Sigmoid colon (tissue), 7 donors: ENCODE measurements at regions of chr2 and their contacts with region 1.

Region 1: DNA sequence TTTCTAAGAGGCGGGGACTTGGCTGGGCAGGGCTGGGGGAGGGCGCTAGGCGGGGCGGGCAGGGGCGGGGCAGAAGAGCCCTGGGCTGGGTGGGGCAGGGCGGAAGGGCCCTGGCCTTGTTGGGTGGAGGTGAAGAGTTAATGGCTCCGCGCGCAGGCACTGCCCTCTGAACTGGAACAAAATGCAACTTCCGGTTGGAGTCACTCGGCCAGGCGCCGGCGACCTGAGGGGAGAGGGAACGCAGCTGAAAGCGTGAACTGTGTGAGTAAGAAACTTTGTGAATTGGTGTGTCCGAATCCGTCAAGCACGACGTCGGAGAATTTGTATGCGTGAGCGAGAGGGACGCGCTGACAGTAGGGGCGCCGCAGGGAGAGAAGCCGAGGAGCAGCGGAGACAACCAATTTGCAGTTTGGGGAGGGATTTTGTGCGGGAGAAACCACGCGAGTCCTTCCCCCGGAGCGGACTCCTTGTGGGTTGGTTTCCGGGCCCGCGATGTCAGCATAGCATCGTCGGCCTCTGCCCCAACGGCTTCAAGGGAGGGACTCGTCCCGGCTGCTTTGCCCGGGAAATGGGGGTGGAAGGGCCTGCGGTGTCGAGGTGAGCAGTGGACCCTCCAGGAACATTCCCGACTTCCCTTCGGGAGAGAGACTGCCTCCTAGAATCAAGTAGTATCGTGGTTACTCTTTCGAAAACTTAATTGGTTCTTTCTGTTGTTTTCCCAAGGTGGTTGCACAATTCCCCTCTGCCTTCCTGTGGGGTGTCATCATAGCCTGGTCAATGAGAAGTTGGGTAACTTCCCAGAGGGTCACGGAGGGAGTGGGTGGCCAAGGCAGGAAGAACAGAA is at the start of gene TANK:
- DNase-seq: peak; percentile 96
- H3K4me3 ChIP-seq: peak within 1 kb of the TSS; percentile 76 to 92 (median 83)
- H3K27ac ChIP-seq: peak within 1 kb of the TSS; percentile 93 to 96 (median 96)
- H3K4me1 ChIP-seq: peaks cover 0 to 54% (median 27%) of the 10 kb centered on the region in 4 donors
- H3K27me3 ChIP-seq: no peaks in the 10 kb centered on the region
- CTCF ChIP-seq: no peak
- EP300 ChIP-seq: peak in 1 of 4 donors; percentile 6
- POLR2A ChIP-seq: peak; percentile 97 to 98
- total RNA-seq, gene TANK: 45.7 to 82.8 (median 71.0) TPM

Region 2: GRCh38 chr2:161122772-161123530 is 37.5 kb before region 1 on chr2:
- intact Hi-C with region 1: loop called (anchors 5 kb)
- DNase-seq: peak; percentile 75
- H3K4me3 ChIP-seq: no peak overlapping the region
- H3K27ac ChIP-seq: peak overlapping the region; percentile 69 to 78 (median 73)
- H3K4me1 ChIP-seq: peaks cover 0 to 30% (median 17%) of the 10 kb centered on the region in 4 donors
- H3K27me3 ChIP-seq: no peaks in the 10 kb centered on the region
- CTCF ChIP-seq: no peak
- EP300 ChIP-seq: peak in 1 of 4 donors; percentile 20
- POLR2A ChIP-seq: no peak

Region 3: DNA sequence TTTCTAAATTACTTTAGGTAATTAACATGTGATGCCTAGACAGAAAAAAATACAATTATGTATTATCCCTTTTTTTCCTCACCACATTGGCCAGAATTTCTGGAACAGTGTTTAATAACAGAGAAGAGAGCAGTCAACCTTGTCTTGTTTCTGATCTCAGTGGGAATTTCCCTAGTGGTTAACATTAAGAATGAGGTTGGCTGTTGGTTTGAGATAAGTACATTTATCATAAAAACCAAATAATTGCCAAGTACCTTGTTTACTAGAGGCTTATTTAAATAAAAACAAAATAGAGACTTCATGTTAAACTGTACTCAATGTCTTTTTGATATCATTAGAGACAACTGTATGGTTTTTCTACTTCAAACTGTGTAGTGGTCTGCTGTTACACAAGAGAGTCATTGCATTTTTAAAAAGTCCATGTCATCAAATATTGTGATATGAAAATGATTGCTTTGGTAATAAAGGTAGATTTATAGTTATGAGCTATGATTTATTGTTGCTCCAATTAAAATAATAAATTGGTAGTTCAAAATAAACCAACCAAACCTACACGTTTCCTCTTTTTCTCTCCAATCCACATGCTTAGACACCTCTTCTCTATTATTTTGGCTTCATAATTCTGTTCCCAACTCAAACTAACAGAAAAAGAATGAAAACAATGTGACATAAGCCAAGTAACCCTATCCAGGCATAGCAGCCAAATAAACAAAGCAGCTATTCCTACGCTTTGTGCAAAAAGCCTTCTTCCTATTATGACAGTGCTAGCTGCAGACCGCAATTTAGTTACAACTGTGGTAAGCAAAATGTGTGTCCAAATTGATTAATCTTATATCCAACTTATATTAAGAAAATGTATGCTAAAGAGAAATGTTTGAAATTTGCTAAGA is 21.1 kb before region 1 on chr2:
- intact Hi-C with region 1: loop called (anchors 2 kb)
- DNase-seq: no peak
- H3K4me3 ChIP-seq: peak overlapping the region in 3 of 4 donors; percentile 9 to 29 (median 26)
- H3K27ac ChIP-seq: peak overlapping the region; percentile 12 to 79 (median 46)
- H3K4me1 ChIP-seq: peaks cover 0 to 64% (median 44%) of the 10 kb centered on the region in 4 donors
- H3K27me3 ChIP-seq: no peaks in the 10 kb centered on the region
- CTCF ChIP-seq: peak in 1 of 4 experiments; percentile 14
- EP300 ChIP-seq: no peak
- POLR2A ChIP-seq: no peak